PC-9 (cell line): ENCODE measurements at regions of chr1 and their contacts with region 1.

Region 1: DNA sequence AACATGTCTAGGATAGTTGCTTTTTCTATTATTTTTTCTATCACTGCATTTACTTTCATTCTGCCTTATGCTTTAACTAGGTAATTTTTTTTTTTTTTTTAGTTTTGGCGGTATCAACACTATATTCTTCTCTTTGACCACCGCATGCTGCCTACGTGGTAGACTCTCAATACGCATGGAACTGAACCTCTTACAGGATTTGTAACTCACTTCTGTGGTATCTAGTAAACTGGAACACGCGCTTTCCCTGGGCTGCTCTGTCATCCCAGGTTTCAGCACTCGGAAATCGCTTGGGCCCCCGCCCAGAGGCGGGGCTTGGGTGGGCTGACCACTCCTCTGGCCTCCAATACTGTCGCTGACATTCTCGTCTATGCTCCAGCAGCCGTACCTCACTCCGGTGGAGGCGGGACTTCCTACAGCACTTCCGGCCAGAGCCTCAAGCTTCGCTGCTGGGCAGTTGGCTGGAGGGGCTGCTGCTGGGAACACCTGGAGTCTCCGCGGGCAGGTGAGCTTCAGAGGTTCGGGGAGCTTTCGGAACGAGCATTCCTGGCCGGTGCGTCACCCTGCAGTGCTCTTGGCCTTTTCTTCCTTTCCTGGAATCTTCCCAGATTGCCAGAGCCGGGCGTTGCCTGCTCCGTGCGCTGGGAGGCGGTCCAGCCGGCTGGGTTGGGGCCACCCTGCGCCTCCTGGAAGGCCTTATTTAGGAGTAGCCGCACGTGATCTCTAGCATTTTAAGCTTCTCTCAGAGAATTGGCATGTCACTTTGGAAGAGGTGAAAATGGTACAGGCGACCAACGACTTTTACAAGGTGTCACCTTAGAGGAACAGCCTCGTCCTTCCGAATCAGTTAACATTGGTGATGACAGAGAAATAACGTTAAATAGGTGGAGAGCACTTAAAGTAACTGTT is at the start of gene TBCE:
- DNase-seq: peak; percentile 98 to 99
- H3K4me3 ChIP-seq: peak within 1 kb of the TSS; percentile 82
- H3K27ac ChIP-seq: peak within 1 kb of the TSS; percentile 84
- H3K4me1 ChIP-seq: peaks cover 22% of the 10 kb centered on the region
- H3K27me3 ChIP-seq: no peaks in the 10 kb centered on the region
- CTCF ChIP-seq: no peak; the same call in 1 of the 2 replicates
- total RNA-seq, gene TBCE: 18.9 and 22.8 TPM in 2 replicates

Region 2: GRCh38 chr1:234486498-234487448 is 880.5 kb before region 1 on chr1:
- CTCF ChIA-PET with region 1: interaction called, 10 read pairs
- POLR2A ChIA-PET with region 1: no interaction called
- intact Hi-C with region 1: no loop called
- DNase-seq: peak; percentile 49 to 73
- H3K4me3 ChIP-seq: no peak overlapping the region
- H3K27ac ChIP-seq: 0 out of 2 replicates have a peak overlapping the region, but pooled peaks have one; percentile 26
- H3K4me1 ChIP-seq: peaks cover 35% of the 10 kb centered on the region
- H3K27me3 ChIP-seq: no peaks in the 10 kb centered on the region
- CTCF ChIP-seq: peak; percentile 71

Region 3: GRCh38 chr1:235253219-235253962 is 113.9 kb before region 1 on chr1:
- CTCF ChIA-PET with region 1: no interaction called
- POLR2A ChIA-PET with region 1: no interaction called
- intact Hi-C with region 1: loop called (anchors 1 kb)
- DNase-seq: peak; percentile 68 to 71
- H3K4me3 ChIP-seq: no peak overlapping the region
- H3K27ac ChIP-seq: 0 out of 2 replicates have a peak overlapping the region, but pooled peaks have one; percentile 25
- H3K4me1 ChIP-seq: peaks cover 8% of the 10 kb centered on the region; the same call in 1 of the 2 replicates
- H3K27me3 ChIP-seq: no peaks in the 10 kb centered on the region
- CTCF ChIP-seq: peak; percentile 88

Region 4: DNA sequence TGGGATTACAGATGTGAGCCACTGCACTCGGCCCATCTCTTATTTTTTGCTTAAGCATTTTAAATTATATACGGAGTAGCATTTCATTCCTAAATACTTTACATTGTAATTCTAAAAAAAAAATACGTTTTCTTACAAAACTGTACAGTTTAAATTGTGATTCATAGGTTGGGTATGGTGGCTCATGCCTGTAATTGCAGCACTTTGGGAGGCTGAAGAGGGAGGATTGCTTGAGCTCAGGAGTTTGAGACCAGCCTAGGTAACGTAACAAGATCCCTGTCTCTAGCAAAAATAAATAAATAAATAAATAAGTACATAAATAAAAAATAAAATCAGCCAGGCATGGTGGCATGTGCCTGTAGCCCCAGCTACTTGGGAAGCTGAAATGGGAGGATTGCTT is 24.6 kb after region 1 on chr1:
- CTCF ChIA-PET with region 1: no interaction called
- POLR2A ChIA-PET with region 1: interaction called, 13 read pairs
- intact Hi-C with region 1: no loop called
- DNase-seq: no peak
- H3K4me3 ChIP-seq: no peak overlapping the region
- H3K27ac ChIP-seq: no peak overlapping the region
- H3K4me1 ChIP-seq: no peaks in the 10 kb centered on the region
- H3K27me3 ChIP-seq: no peaks in the 10 kb centered on the region
- CTCF ChIP-seq: no peak

Region 5: DNA sequence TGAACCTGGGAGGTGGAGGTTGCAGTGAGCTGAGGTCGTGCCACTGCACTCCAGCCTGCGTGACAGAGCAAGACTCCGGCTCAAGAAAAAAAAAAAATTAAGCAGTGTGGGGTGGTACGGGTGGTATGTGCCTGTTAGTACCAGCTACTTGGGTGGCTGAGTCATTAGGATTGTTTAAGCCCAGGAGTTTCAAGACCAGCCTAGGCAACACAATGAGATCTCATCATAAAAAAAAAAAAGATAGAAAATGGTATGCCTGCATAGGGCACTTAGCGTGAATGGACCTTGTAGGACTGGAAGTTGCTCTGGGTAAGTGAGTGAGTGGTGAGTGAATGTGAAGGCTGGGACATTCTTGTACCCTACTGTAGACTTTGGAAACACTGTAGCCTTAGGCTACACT is 36.9 kb after region 1 on chr1:
- CTCF ChIA-PET with region 1: no interaction called
- POLR2A ChIA-PET with region 1: interaction called, 5 read pairs
- intact Hi-C with region 1: loop called (anchors 1 kb)
- DNase-seq: peak; percentile 58 to 77
- H3K4me3 ChIP-seq: no peak overlapping the region
- H3K27ac ChIP-seq: peak overlapping the region; percentile 39; the same call in 1 of the 2 replicates
- H3K4me1 ChIP-seq: peaks cover 40% of the 10 kb centered on the region
- H3K27me3 ChIP-seq: no peaks in the 10 kb centered on the region
- CTCF ChIP-seq: no peak

Region 6: DNA sequence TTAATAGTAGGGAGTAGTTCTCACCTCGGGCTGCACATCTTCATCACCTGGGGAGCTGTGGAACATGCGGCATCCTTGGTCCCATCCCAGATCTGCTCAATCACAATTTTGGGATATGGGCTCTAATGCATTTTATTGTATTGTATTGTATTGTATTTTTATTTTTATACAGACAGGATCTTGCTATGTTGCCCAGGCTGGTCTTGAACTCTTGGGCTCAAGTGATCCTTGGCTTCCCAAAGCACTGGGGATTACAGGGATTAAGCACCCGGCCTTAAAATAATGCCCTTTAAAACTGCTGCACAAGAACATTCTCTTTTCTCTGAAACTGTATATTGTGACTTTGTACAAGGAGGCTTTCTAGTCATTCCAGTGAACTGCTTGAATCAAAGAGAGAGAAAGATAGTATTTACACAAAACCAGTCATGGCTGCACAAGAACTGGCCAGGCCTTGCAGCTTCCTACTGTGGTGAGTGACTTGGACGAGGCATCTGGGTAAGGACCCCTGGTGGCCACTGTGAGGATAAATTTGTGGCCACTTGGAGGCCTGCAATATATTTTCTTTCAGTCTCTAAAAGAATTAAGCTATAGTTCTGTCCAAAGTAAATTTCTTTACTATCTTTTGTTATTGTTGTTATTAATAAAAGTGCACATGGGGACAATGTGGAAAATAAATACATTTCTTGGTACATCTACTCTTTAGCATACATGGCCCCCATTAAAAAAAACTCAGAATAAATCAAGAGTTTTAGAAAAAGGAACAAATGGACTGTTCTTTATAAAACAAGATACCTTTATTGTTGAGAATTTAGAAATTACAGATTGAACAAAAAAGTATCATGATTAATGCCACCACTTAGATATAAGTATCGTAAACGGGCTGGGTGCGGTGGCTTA is 48.0 kb after region 1 on chr1:
- CTCF ChIA-PET with region 1: interaction called, 5 read pairs
- POLR2A ChIA-PET with region 1: no interaction called
- intact Hi-C with region 1: loop called (anchors 1 kb)
- DNase-seq: peak; percentile 68 to 69
- H3K4me3 ChIP-seq: no peak overlapping the region
- H3K27ac ChIP-seq: no peak overlapping the region
- H3K4me1 ChIP-seq: 0 out of 2 replicates have a peak, but pooled peaks cover 5% of the 10 kb centered on the region
- H3K27me3 ChIP-seq: no peaks in the 10 kb centered on the region
- CTCF ChIP-seq: peak; percentile 89